ENCODE measurements at regions of chr3 and their contacts with region 1.

Region 1: DNA sequence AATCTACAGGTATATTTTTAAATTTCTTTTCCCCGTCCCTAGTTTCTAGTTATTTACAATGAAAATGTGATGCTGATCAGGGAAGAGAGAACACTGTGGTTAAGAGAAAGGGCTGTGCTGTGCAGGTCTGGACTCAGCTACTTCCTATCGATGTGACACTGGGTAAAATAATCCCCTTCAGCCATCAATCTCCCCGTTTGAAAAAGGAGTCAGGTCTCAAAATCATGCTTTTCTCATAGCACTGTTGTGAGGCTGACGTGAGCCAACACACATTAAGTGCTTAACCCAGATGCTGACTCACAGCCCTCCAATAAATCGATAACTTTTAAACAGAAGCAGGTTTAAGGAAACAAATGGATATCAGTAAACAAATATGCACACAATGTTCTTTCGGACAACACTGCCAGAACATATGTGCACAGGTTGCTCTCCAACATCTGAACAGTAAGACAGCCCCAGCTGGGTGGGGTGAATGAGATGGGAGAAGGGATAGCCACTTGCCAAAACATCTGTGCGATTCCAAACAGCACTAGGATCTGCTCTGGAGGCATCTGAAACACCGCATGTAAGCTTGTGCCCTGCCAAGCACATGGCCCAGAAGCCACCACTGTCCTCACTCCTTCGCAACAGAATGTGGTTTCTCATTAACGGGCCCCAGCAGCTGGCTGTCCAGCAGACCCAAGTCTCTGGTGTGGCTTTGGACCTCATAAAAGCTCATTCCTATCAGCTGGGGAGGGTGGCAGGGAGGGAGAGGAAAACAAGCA is 143.2 kb upstream of the PRICKLE2 start:
- DNase-seq: no peak
- ATAC-seq: no peak
- H3K4me3 ChIP-seq: no peak overlapping the region
- H3K27ac ChIP-seq: no peak overlapping the region
- H3K4me1 ChIP-seq: no peaks in the 10 kb centered on the region
- H3K27me3 ChIP-seq: peaks cover 24% of the 10 kb centered on the region
- CTCF ChIP-seq: no peak
- POLR2A ChIP-seq: no peak
- RAD21 ChIP-seq: no peak

Region 2: GRCh38 chr3:64300790-64301423 is 67.5 kb before region 1 on chr3:
- CTCF ChIA-PET with region 1: no interaction called
- POLR2A ChIA-PET with region 1: no interaction called
- RAD21 ChIA-PET with region 1: no interaction called
- intact Hi-C with region 1: loop called (anchors 10 kb)
- DNase-seq: no peak
- ATAC-seq: no peak
- H3K4me3 ChIP-seq: no peak overlapping the region
- H3K27ac ChIP-seq: no peak overlapping the region
- H3K4me1 ChIP-seq: no peaks in the 10 kb centered on the region
- H3K27me3 ChIP-seq: no peaks in the 10 kb centered on the region; the same call in 1 of the 2 replicates
- CTCF ChIP-seq: no peak
- POLR2A ChIP-seq: no peak
- RAD21 ChIP-seq: no peak

Region 3: GRCh38 chr3:64355401-64355807 is 13.0 kb before region 1 on chr3:
- CTCF ChIA-PET with region 1: no interaction called
- POLR2A ChIA-PET with region 1: no interaction called
- RAD21 ChIA-PET with region 1: no interaction called
- intact Hi-C with region 1: no loop called
- DNase-seq: no peak
- ATAC-seq: no peak
- H3K4me3 ChIP-seq: no peak overlapping the region
- H3K27ac ChIP-seq: no peak overlapping the region
- H3K4me1 ChIP-seq: no peaks in the 10 kb centered on the region
- H3K27me3 ChIP-seq: 0 out of 2 replicates have a peak, but pooled peaks cover 5% of the 10 kb centered on the region
- CTCF ChIP-seq: no peak
- POLR2A ChIP-seq: no peak
- RAD21 ChIP-seq: no peak

Measured in HCT116 (cell line).